IMR-90 (cell line): ENCODE measurements at regions of chr11 and their contacts with region 1.

Region 1: GRCh38 chr11:76770642-76771445 is 12.3 kb upstream of the TSKU start:
- DNase-seq: peak; percentile 99
- ATAC-seq: peak; percentile 86
- H3K4me3 ChIP-seq: no peak overlapping the region
- H3K27ac ChIP-seq: peak overlapping the region; percentile 85
- H3K4me1 ChIP-seq: peaks cover 43% of the 10 kb centered on the region
- H3K27me3 ChIP-seq: 0 out of 2 replicates have a peak, but pooled peaks cover 1% of the 10 kb centered on the region
- CTCF ChIP-seq: no peak
- POLR2A ChIP-seq: peak; percentile 52; the same call in 1 of the 2 replicates
- RAD21 ChIP-seq: no peak

Region 2: DNA sequence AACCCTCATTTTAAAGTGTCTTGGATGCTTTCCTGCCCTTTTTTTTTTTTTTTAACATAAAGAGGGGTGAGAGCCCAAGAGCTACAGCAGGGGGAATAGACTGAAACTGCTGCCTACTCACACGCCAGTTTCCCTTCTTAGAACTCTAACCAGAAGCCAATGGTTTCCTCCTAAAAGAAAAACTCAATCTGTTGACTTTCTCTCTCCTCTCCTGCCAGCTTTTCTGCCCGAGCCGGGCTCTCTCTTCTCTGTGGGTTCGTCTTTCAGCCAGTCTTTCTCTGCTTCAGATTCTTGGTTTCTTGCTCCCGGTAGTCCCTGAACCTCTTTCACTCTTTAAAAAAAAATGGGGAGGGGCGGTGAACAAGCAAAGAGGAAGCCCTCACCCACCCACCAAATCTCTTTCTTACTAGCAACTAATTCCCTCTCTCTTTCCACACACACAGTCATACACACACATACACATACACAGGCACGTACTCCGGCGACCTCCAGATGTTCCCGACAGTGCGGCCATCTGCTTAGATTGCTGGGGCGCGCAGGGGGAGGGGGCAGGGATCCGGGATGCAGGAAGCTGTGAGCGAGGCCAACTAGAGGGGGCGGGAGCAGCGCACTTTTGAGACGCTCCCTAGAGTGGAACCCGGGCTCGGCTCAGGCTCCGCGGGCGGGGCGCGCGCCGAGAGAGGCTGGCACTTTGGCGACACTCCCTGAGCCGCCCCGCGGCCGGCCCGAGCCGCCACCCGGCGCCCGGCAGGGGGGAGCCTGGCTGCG is 11.9 kb after region 1 on chr11:
- CTCF ChIA-PET with region 1: no interaction called
- POLR2A ChIA-PET with region 1: interaction called, 9 read pairs
- dilution Hi-C with region 1: no loop called
- in situ Hi-C with region 1: no loop called
- intact Hi-C with region 1: loop called (anchors 1 kb)
- DNase-seq: peak; percentile 98
- ATAC-seq: peak; percentile 87
- H3K4me3 ChIP-seq: peak overlapping the region; percentile 92
- H3K27ac ChIP-seq: peak overlapping the region; percentile 90
- H3K4me1 ChIP-seq: peaks cover 24% of the 10 kb centered on the region
- H3K27me3 ChIP-seq: peaks cover 10% of the 10 kb centered on the region; the same call in 1 of the 2 replicates
- CTCF ChIP-seq: no peak
- POLR2A ChIP-seq: no peak; the same call in 1 of the 2 replicates
- RAD21 ChIP-seq: peak; percentile 29; the same call in 1 of the 2 replicates